ENCODE measurements at regions of chr14 and their contacts with region 1.

Region 1: DNA sequence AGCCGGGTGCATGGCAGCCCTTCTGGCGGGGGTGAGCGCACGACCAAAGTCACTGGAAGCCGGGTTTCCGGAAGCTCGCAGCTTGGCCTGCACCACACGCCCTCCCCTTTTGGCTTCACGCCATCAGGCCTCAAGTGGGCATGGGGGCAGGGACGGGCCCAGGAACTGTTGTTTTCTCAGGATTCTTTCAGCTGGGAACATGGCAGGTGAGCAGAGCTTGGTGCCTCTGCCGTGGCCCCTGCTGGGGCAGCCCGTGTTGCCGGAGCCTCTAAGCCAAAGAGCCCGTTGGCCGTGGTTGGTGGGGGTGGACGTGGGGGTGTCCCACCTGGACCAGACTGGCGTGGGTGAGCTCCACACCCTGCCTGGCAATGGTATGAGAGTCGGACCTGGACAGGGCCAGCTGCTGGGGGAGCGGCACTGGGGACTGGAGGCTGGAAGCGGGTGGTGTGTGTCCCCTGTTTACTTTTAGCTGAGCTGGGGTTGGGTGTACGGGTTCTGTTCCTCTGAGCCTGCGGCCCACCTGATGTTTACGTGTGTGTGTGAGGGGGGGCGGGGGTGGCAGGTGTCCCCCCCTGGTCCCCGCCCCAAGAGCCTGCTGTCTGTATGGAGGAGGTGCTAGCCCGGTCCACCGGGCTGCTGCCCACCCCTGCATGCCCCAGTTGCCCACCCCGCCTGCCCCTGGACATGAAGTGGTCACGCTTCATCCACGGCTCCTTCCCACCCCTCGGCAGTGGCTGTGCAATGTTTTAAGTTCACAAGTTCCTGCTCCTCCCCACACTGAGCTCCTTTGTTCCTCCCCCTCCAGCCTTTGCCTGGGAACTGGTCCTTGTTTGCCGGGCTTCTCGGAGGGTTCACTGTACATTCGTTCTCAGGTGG is 28.7 kb upstream of the PLD4 start:
- DNase-seq: peak; percentile 31 to 74 (median 63)
- H3K4me3 ChIP-seq: no peak overlapping the region
- H3K27ac ChIP-seq: no peak overlapping the region
- H3K4me1 ChIP-seq: peaks cover 13 to 15% of the 10 kb centered on the region in 2 donors
- H3K27me3 ChIP-seq: no peaks in the 10 kb centered on the region
- CTCF ChIP-seq: no peak
- POLR2A ChIP-seq: no peak

Region 2: GRCh38 chr14:105045710-105046326 is 149.8 kb after region 1 on chr14:
- intact Hi-C with region 1: loop called in 1 of 2 experiments (anchors 5 kb)
- DNase-seq: peak; percentile 84 to 94 (median 90)
- H3K4me3 ChIP-seq: no peak overlapping the region
- H3K27ac ChIP-seq: no peak overlapping the region
- H3K4me1 ChIP-seq: no peaks in the 10 kb centered on the region
- H3K27me3 ChIP-seq: peaks cover 10% of the 10 kb centered on the region
- CTCF ChIP-seq: peak; percentile 93 to 100 (median 100)
- POLR2A ChIP-seq: peak in 1 of 2 donors; percentile 11